Activated naive CD4-positive, alpha-beta T cell treated with anti-CD3 and anti-CD28 coated beads, Interleukin-2, amount 10 ng/mL, durations not matched to agents 7 days and 5 days (primary cell): ENCODE measurements at regions of chr10 and their contacts with region 1.

Region 1: DNA sequence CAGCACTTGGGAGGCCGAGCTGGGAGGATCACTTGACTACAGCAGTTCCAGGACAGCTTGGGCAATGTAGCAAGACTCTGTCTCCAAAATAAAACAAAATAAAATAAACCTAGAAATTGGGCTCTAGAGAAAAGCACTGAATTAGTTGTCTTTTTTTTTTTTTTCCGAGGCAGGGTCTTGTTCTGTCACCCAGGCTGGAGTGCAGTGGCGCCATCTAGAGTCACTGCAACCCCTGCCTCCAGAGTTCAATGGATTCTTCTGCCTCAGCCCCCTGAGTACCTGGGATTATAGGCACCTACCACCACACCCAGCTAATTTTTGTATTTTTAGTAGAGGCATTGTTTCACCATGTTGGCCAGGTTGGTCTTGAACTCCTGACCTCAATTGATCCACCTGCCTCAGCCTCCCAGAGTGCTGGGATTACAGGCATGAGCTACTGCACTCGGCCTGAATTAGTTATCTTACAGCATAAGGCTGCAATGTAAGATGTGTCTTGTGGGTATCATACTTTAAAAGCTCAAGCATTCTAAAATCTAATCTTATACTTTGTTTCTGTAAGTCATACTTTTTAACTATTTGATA is 12.8 kb downstream of the MEIG1 start:
- DNase-seq: peak; percentile 71
- H3K4me3 Mint-ChIP-seq: no peak overlapping the region
- H3K27ac Mint-ChIP-seq: no peak overlapping the region
- H3K4me1 Mint-ChIP-seq: peaks cover 5% of the 10 kb centered on the region
- H3K27me3 Mint-ChIP-seq: peaks cover 24% of the 10 kb centered on the region

Region 2: DNA sequence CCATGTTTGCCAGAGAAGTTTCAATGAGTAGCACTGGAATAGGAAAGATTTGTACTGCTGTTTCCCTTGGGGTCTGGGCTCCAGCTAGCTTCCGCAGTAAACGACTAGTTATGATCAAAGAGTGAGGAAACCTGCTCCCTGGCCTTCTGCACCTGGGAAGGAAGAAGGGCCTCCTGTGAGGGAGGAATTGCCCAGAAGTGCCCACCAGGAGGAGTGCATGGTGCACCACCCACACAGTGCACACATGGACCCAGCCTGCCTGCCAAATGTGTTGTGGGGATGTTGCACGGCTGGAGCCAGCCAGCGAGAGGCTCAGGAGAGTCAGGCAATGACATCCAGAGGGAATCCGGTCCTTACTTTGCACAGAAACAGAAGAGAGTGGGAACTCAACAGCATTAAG is 170.2 kb before region 1 on chr10:
- CTCF ChIA-PET with region 1: no interaction called
- DNase-seq: no peak
- H3K4me3 Mint-ChIP-seq: no peak overlapping the region
- H3K27ac Mint-ChIP-seq: no peak overlapping the region
- H3K4me1 Mint-ChIP-seq: no peaks in the 10 kb centered on the region
- H3K27me3 Mint-ChIP-seq: peaks cover 20% of the 10 kb centered on the region

Region 3: GRCh38 chr10:14959276-14960057 is 12.5 kb before region 1 on chr10 and contains the start of gene MEIG1:
- CTCF ChIA-PET with region 1: interaction called, 15 read pairs
- DNase-seq: peak; percentile 92
- H3K4me3 Mint-ChIP-seq: peak within 1 kb of the TSS; percentile 85
- H3K27ac Mint-ChIP-seq: peak within 1 kb of the TSS; percentile 98
- H3K4me1 Mint-ChIP-seq: peaks cover 50% of the 10 kb centered on the region
- H3K27me3 Mint-ChIP-seq: no peaks in the 10 kb centered on the region

Region 4: DNA sequence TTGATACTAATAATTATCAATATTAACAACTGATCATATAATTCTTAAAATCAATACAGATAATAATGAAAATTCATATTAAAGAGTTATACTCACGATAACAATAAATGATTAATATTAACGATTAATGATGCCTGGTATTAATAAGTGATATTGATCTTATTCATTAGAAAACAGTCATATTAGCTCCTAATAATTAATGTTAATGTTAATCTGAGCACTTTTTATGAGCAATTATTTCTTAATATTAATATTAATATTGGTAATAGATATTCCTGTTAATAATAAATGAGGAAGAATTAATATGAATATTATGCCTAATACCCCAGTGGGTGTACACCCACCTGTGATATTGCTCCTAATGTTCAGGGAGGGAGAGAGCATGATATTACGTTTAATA is 10.8 kb after region 1 on chr10:
- CTCF ChIA-PET with region 1: interaction called, 12 read pairs
- DNase-seq: no peak
- H3K4me3 Mint-ChIP-seq: no peak overlapping the region
- H3K27ac Mint-ChIP-seq: no peak overlapping the region
- H3K4me1 Mint-ChIP-seq: no peaks in the 10 kb centered on the region
- H3K27me3 Mint-ChIP-seq: peaks cover 8% of the 10 kb centered on the region